Upper lobe of right lung (tissue), 1 donor: ENCODE measurements at regions of chr5 and their contacts with region 1.

Region 1: GRCh38 chr5:177403792-177404640 is 3.6 kb upstream of the PFN3 start:
- DNase-seq: peak; percentile 93
- ATAC-seq: peak; percentile 91
- H3K4me3 ChIP-seq: peak overlapping the region; percentile 63
- H3K27ac ChIP-seq: no peak overlapping the region
- H3K4me1 ChIP-seq: peaks cover 43% of the 10 kb centered on the region
- H3K27me3 ChIP-seq: peaks cover 50% of the 10 kb centered on the region
- CTCF ChIP-seq: peak; percentile 74

Region 2: GRCh38 chr5:177198738-177199137 is 205.3 kb before region 1 on chr5:
- intact Hi-C with region 1: no loop called
- DNase-seq: no peak
- ATAC-seq: no peak
- H3K4me3 ChIP-seq: no peak overlapping the region
- H3K27ac ChIP-seq: no peak overlapping the region
- H3K4me1 ChIP-seq: no peaks in the 10 kb centered on the region
- H3K27me3 ChIP-seq: no peaks in the 10 kb centered on the region
- CTCF ChIP-seq: no peak

Region 3: GRCh38 chr5:177454397-177455035 is 50.5 kb after region 1 on chr5:
- intact Hi-C with region 1: loop called (anchors 10 kb)
- DNase-seq: peak; percentile 96
- ATAC-seq: peak; percentile 84
- H3K4me3 ChIP-seq: peak overlapping the region; percentile 57
- H3K27ac ChIP-seq: peak overlapping the region; percentile 14
- H3K4me1 ChIP-seq: peaks cover 24% of the 10 kb centered on the region
- H3K27me3 ChIP-seq: peaks cover 4% of the 10 kb centered on the region
- CTCF ChIP-seq: peak; percentile 89